HepG2 (cell line): ENCODE measurements at regions of chr12 and their contacts with region 1.

Region 1: GRCh38 chr12:76031537-76032073 is at the start of gene PHLDA1:
- DNase-seq: peak; percentile 91
- ATAC-seq: peak; percentile 88
- H3K4me3 ChIP-seq: peak within 1 kb of the TSS; percentile 97 to 99 (median 98)
- H3K27ac ChIP-seq: peak within 1 kb of the TSS; percentile 95
- H3K4me1 ChIP-seq: peaks cover 54% of the 10 kb centered on the region
- H3K27me3 ChIP-seq: peaks cover 0 to 3% of the 10 kb centered on the region in 2 experiments; a peak in 1 of 5 replicates
- CTCF ChIP-seq: peak; percentile 78
- EP300 ChIP-seq: no peak; a peak in 1 of 4 replicates
- POLR2A ChIP-seq: peak; percentile 95
- RAD21 ChIP-seq: peak; percentile 99
- total RNA-seq, gene PHLDA1: 41.0 and 42.6 TPM in 2 replicates

Region 2: GRCh38 chr12:75511116-75512048 is 520.2 kb before region 1 on chr12 and contains the start of gene KRR1:
- CTCF ChIA-PET with region 1: no interaction called
- POLR2A ChIA-PET with region 1: interaction called, 3 read pairs
- in situ Hi-C with region 1: loop called (anchors 5 kb)
- intact Hi-C with region 1: loop called (anchors 1 kb)
- DNase-seq: peak; percentile 98
- ATAC-seq: peak; percentile 100
- H3K4me3 ChIP-seq: peak within 1 kb of the TSS; percentile 80 to 89 (median 88)
- H3K27ac ChIP-seq: peak within 1 kb of the TSS; percentile 68
- H3K4me1 ChIP-seq: peaks cover 36% of the 10 kb centered on the region
- H3K27me3 ChIP-seq: no peaks in the 10 kb centered on the region; a peak in 2 of 5 replicates
- CTCF ChIP-seq: peak; percentile 24; the same call in 1 of the 2 replicates
- EP300 ChIP-seq: no peak
- POLR2A ChIP-seq: peak; percentile 46 to 88; a peak in 3 of 4 replicates
- RAD21 ChIP-seq: peak; percentile 59
- total RNA-seq, gene KRR1: 103 and 161 TPM in 2 replicates

Region 3: GRCh38 chr12:75628916-75629315 is 402.7 kb before region 1 on chr12:
- CTCF ChIA-PET with region 1: interaction called, 6 read pairs
- POLR2A ChIA-PET with region 1: interaction called, 51 read pairs
- in situ Hi-C with region 1: loop called (anchors 5 kb)
- intact Hi-C with region 1: loop called (anchors 2 kb)
- DNase-seq: peak; percentile 77
- ATAC-seq: peak; percentile 78
- H3K4me3 ChIP-seq: no peak overlapping the region
- H3K27ac ChIP-seq: peak overlapping the region; percentile 52
- H3K4me1 ChIP-seq: peaks cover 43% of the 10 kb centered on the region
- H3K27me3 ChIP-seq: no peaks in the 10 kb centered on the region
- CTCF ChIP-seq: no peak
- EP300 ChIP-seq: peak in 1 of 2 experiments; percentile 70; a peak in 2 of 4 replicates
- POLR2A ChIP-seq: no peak
- RAD21 ChIP-seq: no peak

Region 4: DNA sequence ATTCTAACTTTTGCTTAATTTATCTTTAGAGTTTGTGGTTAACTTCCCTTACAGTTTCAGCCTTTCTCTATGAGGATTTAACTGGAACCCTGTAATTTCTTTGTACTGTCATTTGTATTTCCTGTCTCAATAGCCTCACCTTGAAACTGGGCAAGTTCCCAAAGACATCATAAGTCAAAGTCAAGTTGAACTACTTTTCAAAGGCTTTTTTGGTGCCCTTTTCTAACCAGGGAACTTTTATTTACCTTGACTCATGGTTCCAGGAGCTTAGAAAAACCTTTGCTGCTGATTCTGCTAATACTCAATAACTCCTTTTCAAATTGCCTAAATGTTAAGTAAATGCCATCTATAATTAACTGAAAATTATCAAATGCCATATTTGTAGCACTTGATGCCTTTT is 319.4 kb before region 1 on chr12:
- CTCF ChIA-PET with region 1: no interaction called
- POLR2A ChIA-PET with region 1: interaction called, 6 read pairs
- in situ Hi-C with region 1: no loop called
- intact Hi-C with region 1: loop called (anchors 5 kb)
- DNase-seq: peak; percentile 95
- ATAC-seq: peak; percentile 70
- H3K4me3 ChIP-seq: no peak overlapping the region
- H3K27ac ChIP-seq: no peak overlapping the region
- H3K4me1 ChIP-seq: peaks cover 93% of the 10 kb centered on the region
- H3K27me3 ChIP-seq: no peaks in the 10 kb centered on the region
- CTCF ChIP-seq: no peak
- EP300 ChIP-seq: peak in 1 of 2 experiments; percentile 90; a peak in 2 of 4 replicates
- POLR2A ChIP-seq: no peak
- RAD21 ChIP-seq: no peak

Region 5: GRCh38 chr12:75908961-75909605 is 122.5 kb before region 1 on chr12:
- CTCF ChIA-PET with region 1: no interaction called
- POLR2A ChIA-PET with region 1: interaction called, 11 read pairs
- in situ Hi-C with region 1: no loop called
- intact Hi-C with region 1: loop called (anchors 5 kb)
- DNase-seq: peak; percentile 27
- ATAC-seq: peak; percentile 68
- H3K4me3 ChIP-seq: no peak overlapping the region
- H3K27ac ChIP-seq: peak overlapping the region; percentile 36
- H3K4me1 ChIP-seq: peaks cover 22% of the 10 kb centered on the region
- H3K27me3 ChIP-seq: no peaks in the 10 kb centered on the region
- CTCF ChIP-seq: no peak
- EP300 ChIP-seq: no peak
- POLR2A ChIP-seq: no peak
- RAD21 ChIP-seq: no peak

Region 6: GRCh38 chr12:75960086-75960910 is 71.3 kb before region 1 on chr12:
- CTCF ChIA-PET with region 1: no interaction called
- POLR2A ChIA-PET with region 1: interaction called, 16 read pairs
- in situ Hi-C with region 1: no loop called
- intact Hi-C with region 1: no loop called
- DNase-seq: peak; percentile 81
- ATAC-seq: peak; percentile 85
- H3K4me3 ChIP-seq: peak overlapping the region in 1 of 3 experiments; percentile 8; a peak in 1 of 6 replicates
- H3K27ac ChIP-seq: peak overlapping the region; percentile 54
- H3K4me1 ChIP-seq: peaks cover 56% of the 10 kb centered on the region
- H3K27me3 ChIP-seq: no peaks in the 10 kb centered on the region
- CTCF ChIP-seq: no peak
- EP300 ChIP-seq: peak in 1 of 2 experiments; percentile 91; a peak in 1 of 4 replicates
- POLR2A ChIP-seq: no peak
- RAD21 ChIP-seq: no peak

Region 7: DNA sequence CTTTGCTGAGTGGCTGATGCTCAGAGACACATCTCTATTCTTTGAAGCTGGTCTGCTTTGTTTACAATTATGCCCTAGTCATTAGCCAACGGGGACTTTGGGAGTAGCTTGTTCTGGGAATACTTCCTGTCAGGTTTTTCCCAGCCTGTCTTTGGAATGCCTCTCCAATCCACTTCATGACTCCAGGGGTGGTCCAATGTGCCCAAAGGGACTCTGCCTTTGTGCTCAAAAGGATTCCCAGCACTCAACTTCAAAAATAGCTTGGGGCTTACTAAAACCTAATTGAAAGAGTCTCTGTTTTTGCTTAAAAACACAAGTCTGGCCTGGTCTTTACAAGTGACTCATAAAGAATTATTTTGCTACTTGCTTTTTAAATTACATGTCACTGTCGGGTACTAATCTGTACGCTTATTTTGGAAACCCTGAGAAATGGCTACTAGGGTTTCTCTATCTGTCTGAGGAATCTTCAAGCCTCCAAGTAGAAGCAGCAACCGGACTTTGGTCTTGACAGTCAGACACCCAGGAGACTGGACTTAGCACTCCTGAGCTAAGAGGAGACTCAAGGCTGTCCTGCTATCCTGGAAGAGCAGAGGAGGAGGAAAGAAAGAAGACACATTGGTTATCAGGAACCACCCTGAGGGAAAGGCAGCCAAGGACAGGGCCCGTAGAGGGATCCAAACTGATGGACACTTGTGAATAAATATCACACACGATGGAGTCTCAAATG is 20.7 kb before region 1 on chr12:
- CTCF ChIA-PET with region 1: no interaction called
- POLR2A ChIA-PET with region 1: interaction called, 32 read pairs
- in situ Hi-C with region 1: no loop called
- intact Hi-C with region 1: no loop called
- DNase-seq: peak; percentile 81
- ATAC-seq: peak; percentile 91
- H3K4me3 ChIP-seq: no peak overlapping the region
- H3K27ac ChIP-seq: no peak overlapping the region
- H3K4me1 ChIP-seq: peaks cover 39% of the 10 kb centered on the region
- H3K27me3 ChIP-seq: no peaks in the 10 kb centered on the region
- CTCF ChIP-seq: no peak
- EP300 ChIP-seq: no peak
- POLR2A ChIP-seq: no peak
- RAD21 ChIP-seq: no peak

Region 8: DNA sequence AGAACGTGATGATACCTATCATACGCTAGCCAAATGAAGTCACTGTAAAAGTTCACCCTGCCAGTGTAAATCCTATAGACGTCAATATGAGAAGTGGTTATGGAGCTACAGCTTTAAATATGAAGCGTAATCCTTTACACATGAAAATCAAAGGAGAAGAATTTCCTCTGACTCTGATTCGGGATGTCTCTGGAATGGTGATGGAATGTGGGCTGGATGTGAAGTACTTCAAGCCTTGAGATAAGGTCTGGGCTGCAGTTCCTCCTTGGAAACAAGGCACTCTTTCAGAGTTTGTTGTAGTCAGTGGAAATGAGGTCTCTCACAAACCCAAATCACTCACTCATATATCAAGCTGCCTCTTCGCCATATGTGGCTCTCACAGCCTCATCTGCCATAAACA is 106.0 kb after region 1 on chr12:
- CTCF ChIA-PET with region 1: no interaction called
- POLR2A ChIA-PET with region 1: no interaction called
- in situ Hi-C with region 1: no loop called
- intact Hi-C with region 1: no loop called
- DNase-seq: no peak
- ATAC-seq: no peak
- H3K4me3 ChIP-seq: no peak overlapping the region
- H3K27ac ChIP-seq: no peak overlapping the region
- H3K4me1 ChIP-seq: no peaks in the 10 kb centered on the region
- H3K27me3 ChIP-seq: no peaks in the 10 kb centered on the region; a peak in 1 of 5 replicates
- CTCF ChIP-seq: no peak
- EP300 ChIP-seq: no peak
- POLR2A ChIP-seq: no peak
- RAD21 ChIP-seq: no peak